GM10248 (cell line): ENCODE measurements at regions of chr9 and their contacts with region 1.

Region 1: GRCh38 chr9:36166101-36166927 is 2.9 kb upstream of the CCIN start:
- DNase-seq: peak; percentile 93
- CTCF ChIP-seq: peak; percentile 91

Region 2: DNA sequence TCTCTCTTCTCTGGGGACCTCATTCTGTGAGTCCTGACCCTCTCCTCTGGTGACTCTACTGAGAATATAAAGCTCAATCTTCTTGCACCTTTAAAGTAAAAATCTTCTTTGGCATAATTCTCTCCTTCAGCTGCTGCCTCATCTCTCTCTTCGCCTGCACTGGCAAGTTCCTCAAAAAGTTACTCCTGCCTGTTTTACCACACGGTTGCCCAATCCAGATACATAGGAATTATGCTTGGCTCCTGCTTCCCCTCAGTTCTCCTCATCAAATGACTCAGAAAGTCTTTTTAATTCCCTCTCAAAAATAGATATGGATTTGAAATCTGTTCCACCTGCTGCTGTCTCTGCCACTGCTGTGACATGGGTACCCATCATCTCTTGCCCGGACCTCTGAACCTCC is 274.7 kb before region 1 on chr9:
- CTCF ChIA-PET with region 1: no interaction called
- POLR2A ChIA-PET with region 1: no interaction called
- DNase-seq: no peak
- CTCF ChIP-seq: no peak

Region 3: DNA sequence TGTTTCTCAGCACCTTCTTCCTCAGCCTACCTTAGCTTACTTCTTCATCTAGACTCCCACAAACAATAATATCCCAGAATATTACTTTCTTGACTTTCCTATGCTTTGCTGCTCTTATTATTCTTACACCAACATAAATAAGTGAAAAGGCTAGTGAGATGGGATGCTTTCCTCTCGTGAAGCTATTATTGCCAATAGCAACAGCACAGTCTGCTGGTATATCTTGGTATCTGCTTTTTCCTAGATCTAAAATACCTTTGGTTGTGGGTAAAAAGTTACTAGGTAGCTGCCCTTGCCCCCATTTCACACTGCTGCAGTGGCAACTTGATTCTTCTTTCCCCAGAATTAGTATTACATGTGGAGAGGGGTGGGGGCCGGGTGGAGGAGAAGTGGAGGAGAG is 55.9 kb before region 1 on chr9:
- CTCF ChIA-PET with region 1: interaction called, 262 read pairs
- POLR2A ChIA-PET with region 1: no interaction called
- DNase-seq: no peak
- CTCF ChIP-seq: no peak

Region 4: GRCh38 chr9:36142510-36143244 is 23.6 kb before region 1 on chr9:
- CTCF ChIA-PET with region 1: interaction called, 38 read pairs
- POLR2A ChIA-PET with region 1: no interaction called
- DNase-seq: no peak
- CTCF ChIP-seq: no peak

Region 5: DNA sequence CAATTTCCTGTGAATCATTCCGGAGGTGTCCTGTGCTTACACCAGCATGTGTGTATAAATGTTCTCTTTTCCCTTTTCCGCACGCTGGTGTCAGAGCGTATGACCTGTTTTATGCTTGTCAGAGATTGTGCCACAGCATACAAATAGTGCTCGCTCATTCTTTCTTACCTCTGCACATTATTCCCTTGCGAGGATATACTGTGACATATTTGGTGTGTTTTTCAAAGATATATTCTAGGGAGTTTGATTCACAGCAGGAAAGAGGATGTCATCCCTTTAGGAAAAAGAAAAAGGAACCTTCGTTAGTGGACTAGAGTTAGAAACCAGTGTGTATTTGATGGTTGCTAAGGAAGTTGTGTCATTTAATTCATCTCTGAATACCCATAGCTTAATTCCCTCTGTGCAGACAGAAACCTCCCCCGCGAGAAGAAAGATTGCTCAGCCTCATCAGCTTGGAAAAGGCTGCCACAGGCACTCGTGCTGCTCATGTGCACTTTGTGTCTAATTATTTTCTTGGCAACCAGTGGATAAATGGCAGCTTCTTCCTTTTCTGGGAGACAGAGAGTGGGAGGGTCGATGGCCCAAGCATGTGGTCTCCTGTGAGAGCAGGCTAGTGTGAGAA is 11.9 kb before region 1 on chr9:
- CTCF ChIA-PET with region 1: interaction called, 42 read pairs
- POLR2A ChIA-PET with region 1: no interaction called
- DNase-seq: no peak
- CTCF ChIP-seq: no peak

Region 6: DNA sequence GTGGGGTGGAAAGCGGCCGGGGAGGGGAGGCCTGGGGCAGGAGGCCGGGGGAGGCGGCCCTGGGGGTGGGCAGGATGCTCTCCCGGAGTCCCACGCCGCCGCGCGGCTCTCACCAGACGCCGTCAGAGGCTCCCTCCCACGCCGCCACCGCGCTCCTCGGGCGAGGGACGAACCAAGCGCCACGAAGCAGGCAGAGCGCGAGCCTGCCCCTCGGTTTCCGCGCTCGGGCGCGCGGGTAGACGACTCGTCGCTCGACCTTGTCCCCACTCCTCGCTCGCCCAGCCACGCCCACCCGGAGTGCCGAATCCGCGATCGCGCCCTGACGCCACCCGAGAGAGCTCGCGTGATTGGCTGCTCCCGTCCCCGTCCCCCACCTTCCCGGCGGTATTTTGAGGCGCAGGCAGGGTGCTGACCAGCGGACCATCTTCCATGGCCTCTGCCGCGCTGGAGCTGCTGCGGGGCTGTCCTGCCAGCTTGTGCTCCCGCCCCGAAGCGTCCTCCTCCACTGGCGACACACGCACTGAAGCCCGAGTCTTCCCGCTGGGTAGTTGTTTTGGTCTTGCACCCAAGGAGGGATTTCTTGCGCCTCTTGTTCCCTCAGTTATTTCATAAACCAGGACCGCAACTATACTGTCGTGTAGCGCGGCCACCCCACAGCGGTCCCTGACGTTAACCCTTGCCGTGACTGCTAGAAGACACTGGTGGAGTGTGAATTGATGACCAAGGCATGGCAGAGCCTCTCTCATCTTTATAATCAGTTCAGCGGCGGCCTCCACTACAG is 92.1 kb after region 1 on chr9 and contains the start of gene GNE:
- CTCF ChIA-PET with region 1: no interaction called
- POLR2A ChIA-PET with region 1: no interaction called
- DNase-seq: peak; percentile 95
- CTCF ChIP-seq: no peak

Region 7: GRCh38 chr9:36276781-36277181 is 110.5 kb after region 1 on chr9:
- CTCF ChIA-PET with region 1: no interaction called
- POLR2A ChIA-PET with region 1: no interaction called
- DNase-seq: no peak
- CTCF ChIP-seq: no peak

Region 8: DNA sequence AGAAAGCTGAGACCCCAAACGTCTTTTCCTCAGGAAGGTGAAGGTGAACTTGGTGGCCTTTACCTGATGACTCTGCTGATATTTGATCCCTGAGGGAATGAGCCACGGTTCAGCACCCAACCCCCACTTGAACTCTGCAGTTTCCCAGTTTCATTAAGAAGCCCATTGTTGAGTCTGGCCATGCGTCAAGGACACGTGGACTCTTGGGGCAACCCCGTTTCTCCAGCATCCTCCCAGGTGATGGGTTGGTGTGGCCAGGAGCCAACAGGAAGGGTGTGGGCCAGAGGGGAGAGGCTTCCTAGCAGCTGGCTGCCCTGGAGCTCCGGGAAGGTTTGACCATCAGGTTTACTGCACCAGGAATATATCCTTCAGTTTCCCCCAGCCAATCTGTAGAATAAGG is 151.4 kb after region 1 on chr9:
- CTCF ChIA-PET with region 1: no interaction called
- POLR2A ChIA-PET with region 1: no interaction called
- DNase-seq: no peak
- CTCF ChIP-seq: no peak